ENCODE measurements at regions of chr19 and their contacts with region 1.

Region 1: DNA sequence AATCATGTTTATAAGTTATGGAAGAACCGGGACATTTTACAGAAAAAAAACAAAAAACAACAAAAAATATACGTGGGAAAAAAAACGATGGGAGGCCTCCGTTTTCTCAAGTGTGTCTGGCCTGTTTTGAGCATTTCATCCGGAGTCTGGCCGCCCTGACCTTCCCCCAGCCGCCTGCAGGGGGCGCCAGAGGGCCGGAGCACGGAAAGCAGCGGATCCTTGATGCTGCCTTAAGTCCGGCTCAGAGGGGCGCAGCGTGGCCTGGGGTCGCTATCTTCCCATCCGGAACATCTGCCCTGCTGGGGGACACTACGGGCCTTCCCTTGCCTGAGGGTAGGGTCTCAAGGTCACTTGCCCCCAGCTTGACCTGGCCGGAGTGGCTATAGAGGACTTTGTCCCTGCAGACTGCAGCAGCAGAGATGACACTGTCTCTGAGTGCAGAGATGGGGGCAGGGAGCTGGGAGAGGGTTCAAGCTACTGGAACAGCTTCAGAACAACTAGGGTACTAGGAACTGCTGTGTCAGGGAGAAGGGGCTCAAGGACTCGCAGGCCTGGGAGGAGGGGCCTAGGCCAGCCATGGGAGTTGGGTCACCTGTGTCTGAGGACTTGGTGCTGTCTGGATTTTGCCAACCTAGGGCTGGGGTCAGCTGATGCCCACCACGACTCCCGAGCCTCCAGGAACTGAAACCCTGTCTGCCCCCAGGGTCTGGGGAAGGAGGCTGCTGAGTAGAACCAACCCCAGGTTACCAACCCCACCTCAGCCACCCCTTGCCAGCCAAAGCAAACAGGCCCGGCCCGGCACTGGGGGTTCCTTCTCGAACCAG is 1.8 kb upstream of the APOE start:
- DNase-seq: peak in 1 of 2 donors; percentile 88
- H3K4me3 ChIP-seq: no peak overlapping the region
- H3K27ac ChIP-seq: no peak overlapping the region
- H3K4me1 ChIP-seq: peaks cover 0 to 5% of the 10 kb centered on the region in 2 donors
- H3K27me3 ChIP-seq: peaks cover 3% of the 10 kb centered on the region
- CTCF ChIP-seq: peak; percentile 92 to 99 (median 95)

Region 2: DNA sequence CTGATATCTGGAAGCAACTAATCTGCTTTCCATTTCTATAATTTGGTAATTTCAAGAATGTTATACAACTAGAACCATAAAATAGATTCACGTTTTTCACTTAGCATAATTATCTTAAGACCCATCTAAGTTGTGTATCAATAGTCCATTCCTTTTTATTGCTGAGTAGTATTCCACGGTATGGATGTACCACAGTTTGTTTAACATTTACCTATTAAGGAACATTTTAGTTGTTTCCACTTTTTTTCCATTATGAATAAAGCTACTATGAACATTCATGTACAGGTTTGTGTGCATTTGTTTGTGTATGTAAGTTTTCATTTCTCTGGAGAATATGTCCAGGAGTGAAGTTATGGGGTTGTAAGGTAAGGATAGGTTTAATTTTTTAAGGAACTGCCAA is 529.0 kb before region 1 on chr19:
- intact Hi-C with region 1: no loop called
- DNase-seq: no peak
- H3K4me3 ChIP-seq: no peak overlapping the region
- H3K27ac ChIP-seq: no peak overlapping the region
- H3K4me1 ChIP-seq: no peaks in the 10 kb centered on the region
- H3K27me3 ChIP-seq: no peaks in the 10 kb centered on the region
- CTCF ChIP-seq: no peak

Region 3: DNA sequence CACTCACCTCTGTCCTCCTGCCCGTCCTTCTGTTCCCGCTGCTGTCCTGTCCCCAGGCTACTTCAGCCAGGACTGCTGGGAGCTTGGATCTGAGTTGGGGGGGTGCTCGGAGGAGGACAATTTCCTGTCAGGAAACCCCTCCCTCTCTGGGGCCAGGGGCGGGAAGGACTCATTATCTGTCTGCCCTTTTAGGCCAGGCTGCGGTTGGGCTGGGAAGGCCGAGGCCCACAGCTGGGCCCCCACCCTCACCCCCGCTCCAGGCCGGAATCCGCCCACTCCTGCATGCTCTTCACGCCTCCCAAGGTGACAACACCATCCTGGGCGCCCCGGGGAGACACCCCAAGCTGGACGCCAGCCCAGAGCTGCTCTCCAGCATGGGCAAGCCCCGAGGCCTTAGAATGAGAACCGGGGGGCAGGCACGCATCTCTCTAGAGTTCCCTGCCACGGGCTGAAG is 341.5 kb after region 1 on chr19 and contains the start of gene EXOC3L2:
- intact Hi-C with region 1: loop called (anchors 5 kb)
- DNase-seq: no peak
- H3K4me3 ChIP-seq: no peak within 1 kb of the TSS
- H3K27ac ChIP-seq: no peak within 1 kb of the TSS
- H3K4me1 ChIP-seq: peaks cover 0 to 6% of the 10 kb centered on the region in 2 donors
- H3K27me3 ChIP-seq: no peaks in the 10 kb centered on the region
- CTCF ChIP-seq: no peak
- total RNA-seq, gene EXOC3L2: 33.5 TPM

Region 4: GRCh38 chr19:45331423-45331822 is 427.6 kb after region 1 on chr19:
- intact Hi-C with region 1: loop called (anchors 10 kb)
- DNase-seq: no peak
- H3K4me3 ChIP-seq: no peak overlapping the region
- H3K27ac ChIP-seq: no peak overlapping the region
- H3K4me1 ChIP-seq: no peaks in the 10 kb centered on the region
- H3K27me3 ChIP-seq: no peaks in the 10 kb centered on the region
- CTCF ChIP-seq: no peak